Motor neuron (in vitro differentiated cells): ENCODE measurements at regions of chr18 and their contacts with region 1.

Region 1: GRCh38 chr18:10519999-10520935 is 5.6 kb upstream of the NAPG start:
- ATAC-seq: peak; percentile 80 to 98 (median 88)
- H3K4me3 ChIP-seq: no peak overlapping the region
- H3K27ac ChIP-seq: no peak overlapping the region
- H3K4me1 ChIP-seq: peaks cover 9 to 10% of the 10 kb centered on the region in 2 donors

Region 2: DNA sequence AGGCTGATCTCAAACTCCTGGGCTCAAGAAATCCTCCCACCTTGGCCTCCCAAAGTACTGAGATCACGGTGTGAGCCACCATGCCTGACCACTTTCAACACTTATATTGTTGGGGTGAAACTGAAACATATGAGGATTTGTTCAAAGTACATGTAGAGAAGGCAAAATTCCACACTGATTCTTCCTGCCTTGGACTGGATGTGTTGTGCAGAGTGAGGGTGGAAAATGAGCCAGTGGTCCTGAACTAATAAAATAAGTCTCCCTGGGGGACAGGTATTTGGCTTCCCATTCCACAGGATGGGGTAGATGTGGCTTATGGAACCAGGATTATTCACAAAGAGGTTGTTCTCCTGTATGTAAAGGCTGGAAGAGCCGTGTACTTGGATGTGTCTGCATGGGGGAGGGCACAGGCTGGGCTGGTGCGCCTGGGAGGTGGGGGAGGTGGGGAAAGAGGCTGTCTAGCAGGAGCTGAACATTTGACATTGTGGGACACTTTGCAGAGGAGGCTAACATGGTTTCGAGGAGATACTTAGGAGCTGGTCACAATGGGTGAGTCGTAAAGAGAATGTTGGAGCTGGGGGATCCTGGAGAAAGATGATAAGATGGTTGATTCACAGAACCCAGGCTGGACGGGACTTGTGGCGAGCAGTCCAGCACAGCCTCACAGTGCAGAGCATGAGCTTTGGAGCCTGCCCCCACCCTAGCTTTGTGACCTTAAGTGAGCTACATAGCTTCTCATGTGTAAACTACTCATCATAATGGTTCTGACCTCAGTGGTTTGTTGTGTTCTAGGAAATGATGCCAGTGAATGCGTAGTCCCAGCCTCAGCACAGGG is 634.9 kb before region 1 on chr18 and contains the start of gene TXNDC2:
- in situ Hi-C with region 1: no loop called
- ATAC-seq: no peak
- H3K4me3 ChIP-seq: no peak within 1 kb of the TSS
- H3K27ac ChIP-seq: no peak within 1 kb of the TSS
- H3K4me1 ChIP-seq: no peaks in the 10 kb centered on the region
- total RNA-seq, gene TXNDC2: 0.13 to 0.97 (median 0.29) TPM in 6 of 8 experiments, not detected in the others

Region 3: DNA sequence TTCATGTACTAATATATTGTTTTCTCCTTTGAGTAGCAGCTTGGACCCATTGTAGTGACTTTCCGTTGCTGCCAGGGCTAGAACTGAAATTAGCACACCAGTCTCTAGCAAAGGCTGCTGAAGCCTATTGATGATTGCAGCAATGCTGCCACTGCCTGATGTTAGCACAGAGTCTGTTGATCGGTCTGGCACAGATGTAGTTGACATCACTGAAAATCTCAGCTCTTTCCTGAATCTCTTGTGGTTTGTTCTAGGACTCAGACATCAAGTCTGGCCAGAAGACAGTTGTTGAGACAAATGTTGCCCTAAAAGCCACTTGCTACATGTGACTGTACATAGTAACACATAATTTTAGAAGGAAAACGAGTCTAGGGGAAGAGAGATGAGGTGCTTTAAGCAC is 559.2 kb before region 1 on chr18:
- in situ Hi-C with region 1: loop called in 5 of 9 experiments (anchors 10 to 25 kb)
- ATAC-seq: peak in 6 of 8 experiments; percentile 33 to 61 (median 44)
- H3K4me3 ChIP-seq: no peak overlapping the region
- H3K27ac ChIP-seq: no peak overlapping the region
- H3K4me1 ChIP-seq: peaks cover 3 to 6% of the 10 kb centered on the region in 2 donors

Region 4: GRCh38 chr18:9971313-9971920 is 548.9 kb before region 1 on chr18:
- in situ Hi-C with region 1: loop called (anchors 10 to 25 kb)
- ATAC-seq: peak; percentile 48 to 85 (median 70)
- H3K4me3 ChIP-seq: no peak overlapping the region
- H3K27ac ChIP-seq: no peak overlapping the region
- H3K4me1 ChIP-seq: no peaks in the 10 kb centered on the region

Region 5: DNA sequence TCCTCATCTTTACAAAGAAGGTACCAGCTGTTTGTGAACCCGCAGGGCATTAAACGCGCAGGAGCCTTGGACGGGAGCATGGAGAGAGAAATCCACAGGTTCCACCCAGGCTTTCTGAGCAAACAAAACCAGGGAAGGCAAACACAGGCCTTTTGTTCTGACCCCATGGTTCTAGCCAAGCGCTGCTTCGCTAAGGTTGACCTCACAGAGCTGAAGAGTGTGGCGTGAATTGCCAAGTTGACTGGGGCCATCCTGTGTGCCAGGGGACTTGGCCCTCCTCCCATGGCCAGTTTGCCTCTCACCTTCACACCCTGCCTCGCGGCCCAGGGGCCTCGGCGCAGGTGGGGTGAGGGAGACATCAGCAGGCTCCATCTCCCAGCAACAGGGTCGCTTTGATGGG is 532.3 kb before region 1 on chr18:
- in situ Hi-C with region 1: loop called in 1 of 9 experiments (anchors 25 kb)
- ATAC-seq: peak in 4 of 8 experiments; percentile 15 to 95 (median 39)
- H3K4me3 ChIP-seq: no peak overlapping the region
- H3K27ac ChIP-seq: no peak overlapping the region
- H3K4me1 ChIP-seq: peaks cover 8 to 10% of the 10 kb centered on the region in 2 donors

Region 6: DNA sequence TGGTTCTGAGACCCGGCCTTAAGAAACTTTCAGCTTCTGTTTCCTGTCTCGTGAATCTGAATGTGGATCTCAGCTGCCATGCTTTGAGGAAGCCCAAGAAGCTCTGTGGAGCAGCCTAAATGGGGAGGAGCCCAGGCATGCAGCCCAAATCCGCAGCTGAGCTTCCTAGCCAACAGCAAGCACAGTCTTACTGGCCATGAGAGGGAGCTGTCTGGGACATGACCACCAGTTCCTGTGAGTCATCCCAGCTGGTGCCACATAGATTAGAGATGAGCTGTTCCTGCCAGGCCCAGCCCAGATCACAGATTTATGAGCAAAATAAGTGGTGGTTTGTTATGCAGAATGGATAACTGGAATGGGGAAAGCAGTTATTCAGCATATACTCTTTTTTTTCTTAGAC is 290.2 kb before region 1 on chr18:
- in situ Hi-C with region 1: loop called in 1 of 9 experiments (anchors 25 kb)
- ATAC-seq: peak in 6 of 8 experiments; percentile 50 to 88 (median 72)
- H3K4me3 ChIP-seq: no peak overlapping the region
- H3K27ac ChIP-seq: no peak overlapping the region
- H3K4me1 ChIP-seq: no peaks in the 10 kb centered on the region

Region 7: GRCh38 chr18:10405816-10406663 is 114.2 kb before region 1 on chr18:
- in situ Hi-C with region 1: no loop called
- ATAC-seq: no peak
- H3K4me3 ChIP-seq: no peak overlapping the region
- H3K27ac ChIP-seq: no peak overlapping the region
- H3K4me1 ChIP-seq: peaks cover 51 to 69% of the 10 kb centered on the region in 2 donors

Region 8: DNA sequence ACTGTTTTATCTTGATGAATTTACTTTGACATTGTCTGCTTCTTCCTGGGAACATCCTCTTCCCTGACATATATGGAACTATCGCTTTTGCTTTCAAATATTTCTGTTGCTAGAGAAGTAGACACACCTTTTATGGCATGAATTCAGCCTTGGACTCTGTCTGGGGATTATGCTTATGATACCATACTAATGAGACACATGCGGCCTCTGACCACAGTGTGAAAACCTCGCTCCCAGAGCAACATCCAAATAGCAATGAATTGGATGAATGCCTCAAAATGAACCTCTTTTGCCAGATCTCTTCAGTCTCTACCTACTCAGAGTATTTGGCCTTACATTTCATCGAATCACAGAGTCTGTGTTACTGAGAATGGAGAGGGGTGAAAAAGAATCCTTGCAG is 558.2 kb after region 1 on chr18:
- in situ Hi-C with region 1: no loop called
- ATAC-seq: peak in 3 of 8 experiments; percentile 43 to 77 (median 70)
- H3K4me3 ChIP-seq: no peak overlapping the region
- H3K27ac ChIP-seq: no peak overlapping the region
- H3K4me1 ChIP-seq: no peaks in the 10 kb centered on the region